Dendritic cell treated with granulocyte-macrophage colony-stimulating factor and Interleukin-4, amounts not matched to agents 40 ng/mL and 50 ng/mL, for 4 days (primary cell): ENCODE measurements at regions of chr4 and their contacts with region 1.

Region 1: DNA sequence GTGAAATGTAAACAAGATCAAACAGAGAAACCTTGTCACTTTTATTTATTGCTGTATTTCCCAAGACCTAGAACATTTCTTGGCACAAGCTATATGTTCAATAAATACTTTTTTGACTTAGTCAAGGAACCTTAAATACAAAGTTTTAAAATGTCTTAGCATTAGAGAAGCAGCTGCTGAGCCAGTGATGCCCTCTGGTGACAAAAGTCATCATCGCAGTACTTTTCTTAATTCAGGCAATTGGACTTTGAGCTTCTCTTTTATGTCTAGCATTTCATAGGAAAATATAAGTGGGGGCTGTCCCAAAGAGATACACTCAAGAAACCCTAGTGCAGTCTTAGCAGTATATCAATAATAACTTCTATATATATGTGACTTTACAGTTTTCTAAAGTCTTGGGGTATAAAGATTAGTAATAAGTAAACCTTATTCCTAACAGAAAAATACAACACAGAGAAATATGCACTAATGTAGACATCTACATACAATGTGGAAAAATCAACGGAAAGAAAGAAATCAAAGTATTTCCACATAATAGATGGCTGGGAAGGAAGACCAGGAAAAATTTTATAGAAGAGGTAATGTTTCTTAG is 118.4 kb downstream of the DTHD1 start:
- H3K4me3 Mint-ChIP-seq: no peak overlapping the region
- H3K27ac Mint-ChIP-seq: no peak overlapping the region
- H3K4me1 Mint-ChIP-seq: peaks cover 5% of the 10 kb centered on the region
- H3K27me3 Mint-ChIP-seq: no peaks in the 10 kb centered on the region

Region 2: GRCh38 chr4:35934320-35934981 is 465.4 kb before region 1 on chr4:
- intact Hi-C with region 1: loop called (anchors 5 kb)
- H3K4me3 Mint-ChIP-seq: no peak overlapping the region
- H3K27ac Mint-ChIP-seq: no peak overlapping the region
- H3K4me1 Mint-ChIP-seq: no peaks in the 10 kb centered on the region
- H3K27me3 Mint-ChIP-seq: no peaks in the 10 kb centered on the region

Region 3: GRCh38 chr4:36310793-36311192 is 89.1 kb before region 1 on chr4:
- intact Hi-C with region 1: no loop called
- H3K4me3 Mint-ChIP-seq: peak overlapping the region; percentile 23
- H3K27ac Mint-ChIP-seq: peak overlapping the region; percentile 76
- H3K4me1 Mint-ChIP-seq: peaks cover 45% of the 10 kb centered on the region
- H3K27me3 Mint-ChIP-seq: no peaks in the 10 kb centered on the region